Astrocyte of the cerebellum (primary cell): ENCODE measurements at regions of chr3 and their contacts with region 1.

Region 1: GRCh38 chr3:65669163-65669875 is 369.4 kb downstream of the MAGI1 start:
- DNase-seq: peak; percentile 12
- H3K4me3 ChIP-seq: no peak overlapping the region
- CTCF ChIP-seq: no peak

Region 2: DNA sequence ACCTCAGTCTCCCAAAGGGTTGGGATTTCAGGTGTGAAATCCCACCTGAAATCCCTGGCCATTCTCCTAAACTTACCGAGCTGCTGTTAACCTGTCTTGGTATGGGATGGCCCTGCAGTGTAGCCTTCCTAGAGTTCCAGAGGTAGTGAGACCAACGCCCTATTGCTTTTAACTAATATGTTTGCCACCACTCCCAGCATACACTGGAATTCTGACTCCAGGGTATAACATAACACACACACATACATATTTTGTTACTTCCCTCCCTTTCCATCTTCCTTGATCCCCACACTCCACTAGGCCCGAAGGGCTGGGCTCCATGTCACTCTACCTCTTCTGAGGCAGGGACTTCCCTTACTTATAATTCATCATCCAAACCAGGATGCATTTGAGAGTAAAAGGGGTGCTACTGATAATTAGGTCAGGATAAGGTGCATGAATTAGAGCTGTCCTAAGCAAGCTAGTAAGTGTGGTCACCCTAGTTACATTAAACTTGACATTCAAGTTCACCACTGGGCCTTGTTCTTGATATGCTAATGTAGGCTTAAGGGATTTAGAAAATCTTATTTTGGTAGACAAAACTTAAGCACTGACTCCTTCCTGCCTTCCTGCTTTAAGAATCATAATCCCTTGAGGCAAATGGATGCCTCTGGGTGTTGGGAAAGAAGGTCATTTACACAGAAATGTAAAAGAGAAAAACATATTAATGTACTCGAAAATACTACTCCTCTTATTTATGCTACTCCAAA is 51.8 kb after region 1 on chr3:
- in situ Hi-C with region 1: loop called (anchors 5 kb)
- DNase-seq: no peak
- H3K4me3 ChIP-seq: no peak overlapping the region
- CTCF ChIP-seq: no peak